ENCODE measurements at regions of chr19 and their contacts with region 1.

Region 1: DNA sequence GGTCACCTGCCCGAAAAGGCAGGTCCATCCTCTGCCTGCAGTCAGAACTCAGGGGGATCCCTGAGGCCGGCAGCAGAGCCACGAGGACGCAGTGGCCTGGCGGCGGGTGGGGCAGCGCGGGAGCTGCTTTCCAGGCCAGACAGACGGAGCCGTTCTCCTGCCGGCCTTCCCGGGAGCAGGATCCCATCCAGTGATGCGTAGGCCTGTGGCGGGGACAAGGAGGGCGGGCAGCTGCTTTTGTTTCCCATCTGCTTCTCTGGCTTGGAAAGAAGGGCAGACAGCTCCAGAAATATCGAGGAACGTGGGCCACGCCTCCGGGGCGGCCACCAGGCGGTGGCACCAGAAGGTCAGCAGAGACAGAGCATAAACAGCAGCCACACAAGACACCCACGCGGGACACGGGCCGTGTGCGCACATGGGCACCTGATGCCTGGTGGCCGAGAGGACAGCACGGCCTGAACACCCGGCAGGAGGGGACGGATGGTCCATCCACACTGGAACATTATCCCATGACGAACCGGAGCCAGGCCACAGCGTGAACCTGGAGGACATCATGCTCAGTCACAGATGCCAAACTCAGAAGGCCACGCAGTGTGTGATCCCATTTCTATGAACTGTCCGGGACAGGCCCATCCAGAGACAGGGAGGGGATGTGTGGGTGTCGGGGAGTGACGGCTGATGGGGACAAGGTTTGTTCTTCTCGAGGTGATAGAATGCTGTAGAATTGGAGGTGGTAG is 13.9 kb upstream of the MKNK2 start:
- DNase-seq: peak; percentile 83 to 95
- ATAC-seq: peak; percentile 39 to 71 (median 68)
- H3K4me3 ChIP-seq: peak overlapping the region; percentile 41
- H3K27ac ChIP-seq: peak overlapping the region; percentile 97
- H3K4me1 ChIP-seq: peaks cover 43% of the 10 kb centered on the region
- H3K27me3 ChIP-seq: no peaks in the 10 kb centered on the region
- CTCF ChIP-seq: peak; percentile 15

Region 2: DNA sequence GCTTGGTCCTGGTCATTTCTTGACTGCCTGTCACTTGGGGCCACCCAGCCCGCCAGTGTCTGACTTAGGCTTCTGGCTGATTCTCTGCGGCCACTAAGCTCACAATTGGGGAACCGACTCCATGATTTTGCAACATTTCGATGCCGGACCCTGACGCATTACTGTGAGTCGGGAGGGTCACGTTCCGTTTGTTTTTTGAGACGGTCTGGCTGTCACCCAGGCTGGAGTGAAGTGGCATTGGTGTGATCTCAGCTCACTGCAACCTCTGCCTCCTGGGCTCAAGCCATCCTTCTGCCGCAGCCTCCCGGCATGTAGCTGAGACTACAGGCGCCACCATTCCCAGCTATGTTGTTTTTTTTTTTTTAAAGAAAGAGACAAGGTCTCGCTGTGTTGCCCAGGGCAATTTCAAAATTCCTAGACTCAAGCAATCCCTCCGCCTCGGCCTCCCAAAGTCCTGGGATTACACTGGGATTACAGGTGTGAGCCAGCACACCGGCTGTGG is 163.0 kb before region 1 on chr19:
- intact Hi-C with region 1: no loop called
- DNase-seq: peak in 1 of 2 donors; percentile 62
- ATAC-seq: no peak
- H3K4me3 ChIP-seq: no peak overlapping the region
- H3K27ac ChIP-seq: no peak overlapping the region
- H3K4me1 ChIP-seq: peaks cover 10% of the 10 kb centered on the region
- H3K27me3 ChIP-seq: no peaks in the 10 kb centered on the region
- CTCF ChIP-seq: no peak

Region 3: GRCh38 chr19:2016041-2016807 is 48.7 kb before region 1 on chr19:
- intact Hi-C with region 1: loop called in 1 of 2 experiments (anchors 1 kb)
- DNase-seq: peak; percentile 77 to 89
- ATAC-seq: peak; percentile 80 to 87 (median 84)
- H3K4me3 ChIP-seq: peak overlapping the region; percentile 38
- H3K27ac ChIP-seq: peak overlapping the region; percentile 38
- H3K4me1 ChIP-seq: no peaks in the 10 kb centered on the region
- H3K27me3 ChIP-seq: no peaks in the 10 kb centered on the region
- CTCF ChIP-seq: no peak

Region 4: DNA sequence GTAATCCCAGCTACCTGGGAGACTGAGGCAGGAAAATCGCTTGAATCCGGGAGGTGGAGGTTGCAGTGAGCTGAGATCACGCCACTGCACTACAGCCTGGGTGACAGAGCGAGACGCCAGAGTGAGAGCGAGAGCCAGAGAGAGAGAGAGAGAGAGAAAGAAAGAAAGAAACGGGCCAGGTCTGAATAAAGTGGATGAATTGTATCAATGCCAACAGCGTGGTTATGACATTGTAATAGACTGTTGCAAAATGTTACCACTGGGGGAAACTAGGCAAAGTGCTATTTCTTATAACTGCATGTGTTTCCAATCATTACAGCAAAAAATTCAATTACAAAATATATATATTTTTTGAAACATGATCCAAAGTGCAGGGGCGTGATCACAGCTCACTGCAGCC is 37.6 kb before region 1 on chr19:
- intact Hi-C with region 1: loop called in 1 of 2 experiments (anchors 5 kb)
- DNase-seq: peak; percentile 28 to 65
- ATAC-seq: no peak
- H3K4me3 ChIP-seq: no peak overlapping the region
- H3K27ac ChIP-seq: no peak overlapping the region
- H3K4me1 ChIP-seq: peaks cover 14% of the 10 kb centered on the region
- H3K27me3 ChIP-seq: no peaks in the 10 kb centered on the region
- CTCF ChIP-seq: no peak

Region 5: DNA sequence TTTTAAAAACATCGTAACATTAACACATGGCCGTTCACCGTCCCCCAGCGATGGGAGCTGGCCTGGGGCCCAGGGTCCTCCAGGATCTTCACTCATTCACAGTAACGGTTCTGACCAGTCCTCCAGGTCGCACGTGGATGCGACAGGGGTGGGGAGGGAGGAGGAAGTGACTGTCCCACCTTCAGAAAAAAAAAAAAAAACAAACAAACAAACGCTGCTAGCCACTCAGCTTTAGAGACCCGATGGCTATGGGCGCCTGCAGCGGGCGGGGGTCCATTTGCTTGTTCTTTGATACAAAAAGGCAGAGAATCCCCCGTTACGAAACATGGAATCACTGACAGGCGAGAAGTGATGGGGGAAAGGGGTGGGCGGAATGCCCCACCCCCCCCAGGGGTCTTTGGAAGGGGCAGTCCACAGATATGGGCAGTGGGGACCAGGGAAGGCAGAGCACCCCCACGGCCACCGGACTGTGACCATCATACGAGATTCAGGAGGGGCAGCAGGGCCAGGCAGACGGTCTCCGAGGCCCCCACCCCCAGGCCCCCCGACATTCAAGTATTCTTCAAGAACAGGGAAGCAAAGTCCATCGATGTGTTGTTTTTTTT is 27.2 kb before region 1 on chr19:
- intact Hi-C with region 1: no loop called
- DNase-seq: peak in 1 of 2 donors; percentile 62
- ATAC-seq: no peak
- H3K4me3 ChIP-seq: no peak overlapping the region
- H3K27ac ChIP-seq: peak overlapping the region; percentile 98
- H3K4me1 ChIP-seq: peaks cover 37% of the 10 kb centered on the region
- H3K27me3 ChIP-seq: no peaks in the 10 kb centered on the region
- CTCF ChIP-seq: no peak

Region 6: GRCh38 chr19:2084993-2085720 is 20.2 kb after region 1 on chr19:
- intact Hi-C with region 1: no loop called
- DNase-seq: peak; percentile 65 to 78
- ATAC-seq: peak in 2 of 4 donors; percentile 9 to 11
- H3K4me3 ChIP-seq: no peak overlapping the region
- H3K27ac ChIP-seq: peak overlapping the region; percentile 2
- H3K4me1 ChIP-seq: peaks cover 13% of the 10 kb centered on the region
- H3K27me3 ChIP-seq: no peaks in the 10 kb centered on the region
- CTCF ChIP-seq: no peak